Panc1 (cell line): ENCODE measurements at regions of chr11 and their contacts with region 1.

Region 1: GRCh38 chr11:82250053-82250452 is 483.6 kb downstream of the FAM181B start:
- DNase-seq: no peak
- ATAC-seq: no peak
- H3K4me3 ChIP-seq: no peak overlapping the region
- H3K27ac ChIP-seq: no peak overlapping the region
- H3K4me1 ChIP-seq: no peaks in the 10 kb centered on the region
- H3K27me3 ChIP-seq: no peaks in the 10 kb centered on the region
- CTCF ChIP-seq: no peak

Region 2: DNA sequence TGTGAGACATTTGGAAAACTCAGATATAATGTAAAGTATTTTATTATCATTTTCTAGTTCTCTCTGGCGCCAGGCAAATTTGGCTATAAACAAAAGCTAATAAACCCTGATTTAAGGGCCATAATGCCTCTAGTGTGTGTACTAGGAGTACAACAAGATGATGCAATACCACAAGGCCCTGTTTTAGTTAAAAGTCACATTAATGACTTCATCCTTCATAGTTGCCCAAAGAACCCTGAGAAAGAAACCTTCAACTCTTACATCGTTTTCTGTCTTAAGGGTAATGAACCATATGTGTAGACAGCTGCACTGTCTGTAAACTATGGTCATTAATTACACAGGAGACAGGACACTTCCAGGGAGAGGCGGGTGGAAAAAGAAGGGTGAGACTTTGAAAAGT is 54.8 kb before region 1 on chr11:
- CTCF ChIA-PET with region 1: no interaction called
- POLR2A ChIA-PET with region 1: no interaction called
- in situ Hi-C with region 1: no loop called
- intact Hi-C with region 1: loop called (anchors 5 kb)
- DNase-seq: no peak
- ATAC-seq: no peak
- H3K4me3 ChIP-seq: no peak overlapping the region
- H3K27ac ChIP-seq: no peak overlapping the region
- H3K4me1 ChIP-seq: no peaks in the 10 kb centered on the region
- H3K27me3 ChIP-seq: no peaks in the 10 kb centered on the region
- CTCF ChIP-seq: no peak

Region 3: DNA sequence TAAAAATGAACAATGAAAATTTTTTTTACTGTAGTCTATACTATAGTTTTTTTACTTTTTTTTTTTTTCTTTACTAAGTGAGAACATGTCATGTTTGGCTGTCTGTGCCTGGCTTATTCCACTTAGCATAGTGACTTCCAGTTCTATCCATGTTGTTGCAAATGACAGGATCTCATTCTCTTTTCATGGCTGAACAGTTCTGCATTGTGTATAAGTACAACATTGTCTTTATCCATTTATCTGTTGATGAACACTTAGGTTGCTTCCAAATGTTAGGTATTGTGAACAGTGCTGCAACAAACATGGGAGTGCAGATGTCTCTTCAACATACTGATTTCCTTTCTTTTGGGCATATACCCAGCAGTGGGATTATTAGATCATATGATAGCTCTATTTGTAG is 1124.3 kb after region 1 on chr11:
- CTCF ChIA-PET with region 1: no interaction called
- POLR2A ChIA-PET with region 1: no interaction called
- in situ Hi-C with region 1: no loop called
- intact Hi-C with region 1: no loop called
- DNase-seq: no peak
- ATAC-seq: no peak
- H3K4me3 ChIP-seq: no peak overlapping the region
- H3K27ac ChIP-seq: no peak overlapping the region
- H3K4me1 ChIP-seq: no peaks in the 10 kb centered on the region
- H3K27me3 ChIP-seq: no peaks in the 10 kb centered on the region
- CTCF ChIP-seq: no peak